Upper lobe of right lung (tissue), 1 donor: ENCODE measurements at regions of chr6 and their contacts with region 1.

Region 1: GRCh38 chr6:139364302-139364981 is 10.0 kb downstream of the CITED2 start:
- DNase-seq: no peak
- ATAC-seq: peak; percentile 78
- H3K4me3 ChIP-seq: no peak overlapping the region
- H3K27ac ChIP-seq: no peak overlapping the region
- H3K4me1 ChIP-seq: peaks cover 15% of the 10 kb centered on the region
- H3K27me3 ChIP-seq: no peaks in the 10 kb centered on the region
- CTCF ChIP-seq: peak; percentile 78

Region 2: DNA sequence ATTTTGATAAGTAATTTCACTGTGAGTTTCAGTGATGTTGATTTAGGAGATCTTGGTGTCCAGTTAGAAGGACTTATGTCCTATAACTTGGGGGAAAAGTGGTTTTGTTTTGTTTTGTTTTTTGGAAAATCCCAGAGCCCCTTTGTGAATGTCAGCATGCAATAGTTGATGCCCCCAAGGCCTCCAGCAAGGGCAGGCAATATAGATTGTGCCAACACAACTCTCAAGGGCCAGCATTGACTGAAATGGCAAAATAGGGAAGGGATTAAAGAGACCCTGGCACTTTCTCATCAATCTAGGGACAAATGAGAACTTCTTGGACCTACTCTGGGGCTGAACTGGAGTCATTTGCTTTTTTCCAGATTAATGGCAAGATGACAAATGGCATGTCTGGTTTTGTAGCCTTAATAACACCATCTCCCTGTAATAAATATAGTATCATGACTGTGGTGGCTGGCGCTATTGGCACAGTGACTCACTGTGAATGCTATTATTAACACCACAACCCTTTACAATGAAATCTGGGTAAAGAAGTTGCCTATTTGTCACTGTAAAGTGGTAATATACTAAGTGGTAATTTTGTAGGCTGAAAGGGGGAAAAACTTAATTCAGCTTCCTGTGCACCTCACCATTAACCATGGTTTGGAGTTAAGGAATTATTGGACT is 284.1 kb before region 1 on chr6:
- intact Hi-C with region 1: no loop called
- DNase-seq: no peak
- ATAC-seq: no peak
- H3K4me3 ChIP-seq: no peak overlapping the region
- H3K27ac ChIP-seq: no peak overlapping the region
- H3K4me1 ChIP-seq: no peaks in the 10 kb centered on the region
- H3K27me3 ChIP-seq: no peaks in the 10 kb centered on the region
- CTCF ChIP-seq: no peak

Region 3: GRCh38 chr6:139219746-139220145 is 144.7 kb before region 1 on chr6:
- intact Hi-C with region 1: loop called (anchors 10 kb)
- DNase-seq: no peak
- ATAC-seq: no peak
- H3K4me3 ChIP-seq: no peak overlapping the region
- H3K27ac ChIP-seq: peak overlapping the region; percentile 66
- H3K4me1 ChIP-seq: peaks cover 9% of the 10 kb centered on the region
- H3K27me3 ChIP-seq: no peaks in the 10 kb centered on the region
- CTCF ChIP-seq: no peak

Region 4: DNA sequence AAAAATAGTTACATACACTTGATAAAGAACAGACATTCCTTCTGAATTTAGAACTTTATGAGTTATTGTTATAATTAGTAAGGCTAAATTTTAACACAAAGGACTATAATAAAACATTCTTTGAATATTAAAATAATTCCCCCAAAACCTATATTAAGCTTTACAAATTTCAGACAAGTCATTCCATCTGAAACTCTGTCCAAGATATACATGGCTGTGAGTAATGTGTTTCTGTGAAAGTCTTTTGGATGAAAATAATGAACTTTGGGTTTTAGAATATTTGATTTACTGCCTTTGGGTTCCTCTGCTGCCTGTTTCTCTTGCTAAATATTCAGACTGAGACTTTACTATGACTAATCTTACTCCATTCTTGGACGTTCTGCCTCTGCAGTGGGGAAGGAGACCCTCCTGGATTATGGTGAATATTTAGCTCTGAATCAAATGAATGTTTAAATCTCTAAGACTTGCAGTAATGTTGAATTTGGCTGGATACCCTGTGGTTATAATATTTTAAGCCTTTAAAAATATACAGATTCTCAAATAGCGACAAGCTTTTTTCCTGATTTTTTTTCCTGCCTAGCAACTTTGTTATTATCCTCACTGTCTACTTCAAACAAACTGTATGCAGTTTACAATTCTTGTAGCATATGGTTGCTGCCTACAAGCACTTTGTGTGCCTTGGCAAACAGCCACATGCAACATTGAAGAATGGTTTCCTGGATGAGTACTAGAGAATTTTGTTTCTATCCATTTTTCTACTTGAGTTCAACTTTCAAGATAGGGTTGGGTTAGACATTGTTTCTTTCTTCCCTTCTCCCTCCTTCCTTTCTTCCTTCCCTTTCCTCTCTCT is 124.1 kb before region 1 on chr6:
- intact Hi-C with region 1: no loop called
- DNase-seq: no peak
- ATAC-seq: no peak
- H3K4me3 ChIP-seq: no peak overlapping the region
- H3K27ac ChIP-seq: peak overlapping the region; percentile 7
- H3K4me1 ChIP-seq: peaks cover 9% of the 10 kb centered on the region
- H3K27me3 ChIP-seq: no peaks in the 10 kb centered on the region
- CTCF ChIP-seq: no peak

Region 5: GRCh38 chr6:139433631-139434419 is 69.4 kb after region 1 on chr6:
- intact Hi-C with region 1: no loop called
- DNase-seq: no peak
- ATAC-seq: peak; percentile 85
- H3K4me3 ChIP-seq: no peak overlapping the region
- H3K27ac ChIP-seq: no peak overlapping the region
- H3K4me1 ChIP-seq: no peaks in the 10 kb centered on the region
- H3K27me3 ChIP-seq: no peaks in the 10 kb centered on the region
- CTCF ChIP-seq: no peak

Region 6: DNA sequence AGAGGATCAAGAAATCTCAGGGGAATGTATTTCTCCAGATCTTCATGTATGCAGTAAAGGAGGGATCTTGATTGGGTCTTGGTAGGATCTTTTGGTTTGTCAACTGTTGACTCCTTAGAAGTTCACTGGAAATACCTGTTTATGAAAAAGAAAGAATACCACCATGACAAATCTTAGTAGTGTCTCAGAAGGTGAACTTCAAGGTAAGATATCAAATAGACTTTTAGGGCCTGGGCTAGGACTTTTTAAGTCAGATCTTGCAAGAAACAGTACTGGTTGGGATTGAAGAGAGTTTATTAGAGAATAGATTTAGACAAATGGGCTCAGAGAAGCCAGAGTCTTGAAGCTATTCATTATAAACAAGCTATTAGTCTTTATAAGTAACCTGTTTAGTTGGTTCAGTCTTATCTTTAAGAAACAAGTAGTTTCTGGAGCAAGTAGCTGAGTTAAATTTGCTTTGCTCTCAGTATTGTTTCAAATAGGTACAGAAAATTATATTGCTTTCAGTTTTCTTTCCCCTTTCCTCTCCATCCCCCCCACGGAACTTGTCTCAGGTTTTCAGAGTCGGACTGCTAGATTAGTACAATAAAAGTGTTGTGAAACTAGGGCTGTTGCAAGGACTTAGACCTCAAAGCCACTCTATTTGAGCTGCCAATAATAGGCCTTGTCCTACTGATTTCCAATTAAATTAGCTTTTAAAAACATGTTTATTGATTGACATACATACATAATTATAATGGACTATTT is 539.1 kb after region 1 on chr6:
- intact Hi-C with region 1: no loop called
- DNase-seq: no peak
- ATAC-seq: peak; percentile 74
- H3K4me3 ChIP-seq: no peak overlapping the region
- H3K27ac ChIP-seq: no peak overlapping the region
- H3K4me1 ChIP-seq: no peaks in the 10 kb centered on the region
- H3K27me3 ChIP-seq: no peaks in the 10 kb centered on the region
- CTCF ChIP-seq: no peak